PC-3 (cell line): ENCODE measurements at regions of chr1 and their contacts with region 1.

Region 1: GRCh38 chr1:162696286-162696862 is 64.1 kb downstream of the DDR2 start:
- DNase-seq: peak; percentile 93
- ATAC-seq: peak; percentile 94
- H3K4me3 ChIP-seq: peak overlapping the region; percentile 40; the same call in 1 of the 2 replicates
- H3K27ac ChIP-seq: peak overlapping the region; percentile 71
- H3K4me1 ChIP-seq: peaks cover 36% of the 10 kb centered on the region
- H3K27me3 ChIP-seq: no peaks in the 10 kb centered on the region
- CTCF ChIP-seq: no peak

Region 2: DNA sequence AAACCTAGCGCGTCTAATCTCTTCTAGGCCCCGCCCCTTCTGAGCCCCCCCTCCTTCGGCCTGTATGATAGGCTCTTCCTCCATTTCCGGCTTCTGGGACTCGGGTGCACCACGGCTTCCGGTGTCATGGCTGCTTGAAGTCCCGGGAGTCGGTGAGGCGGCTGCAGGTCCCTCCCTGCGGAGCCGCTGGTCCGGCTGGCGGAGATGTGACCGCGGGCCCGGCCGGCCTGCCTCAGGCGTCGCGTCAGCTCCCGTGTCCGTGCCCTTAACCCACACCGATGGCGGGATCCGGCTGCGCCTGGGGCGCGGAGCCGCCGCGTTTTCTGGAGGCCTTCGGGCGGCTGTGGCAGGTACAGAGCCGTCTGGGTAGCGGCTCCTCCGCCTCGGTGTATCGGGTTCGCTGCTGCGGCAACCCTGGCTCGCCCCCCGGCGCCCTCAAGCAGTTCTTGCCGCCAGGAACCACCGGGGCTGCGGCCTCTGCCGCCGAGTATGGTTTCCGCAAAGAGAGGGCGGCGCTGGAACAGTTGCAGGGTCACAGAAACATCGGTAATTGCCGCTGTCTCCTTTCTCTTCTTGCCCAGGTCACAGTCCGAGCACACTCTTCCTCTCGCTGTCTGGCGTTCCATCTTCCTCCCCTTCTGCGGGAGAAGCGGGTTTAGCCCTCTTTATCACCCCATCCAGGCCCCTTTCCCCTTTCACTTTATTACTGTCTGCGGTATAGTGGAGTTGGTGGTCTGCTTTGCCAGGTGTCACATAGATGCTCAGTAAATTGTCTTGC is 198.5 kb before region 1 on chr1 and contains the start of gene UHMK1:
- CTCF ChIA-PET with region 1: no interaction called
- POLR2A ChIA-PET with region 1: no interaction called
- intact Hi-C with region 1: loop called (anchors 5 kb)
- DNase-seq: peak; percentile 91
- ATAC-seq: peak; percentile 93
- H3K4me3 ChIP-seq: peak within 1 kb of the TSS; percentile 77
- H3K27ac ChIP-seq: peak within 1 kb of the TSS; percentile 51
- H3K4me1 ChIP-seq: peaks cover 37% of the 10 kb centered on the region
- H3K27me3 ChIP-seq: no peaks in the 10 kb centered on the region
- CTCF ChIP-seq: no peak
- total RNA-seq, gene UHMK1: 69.4 and 70.4 TPM in 2 replicates

Region 3: DNA sequence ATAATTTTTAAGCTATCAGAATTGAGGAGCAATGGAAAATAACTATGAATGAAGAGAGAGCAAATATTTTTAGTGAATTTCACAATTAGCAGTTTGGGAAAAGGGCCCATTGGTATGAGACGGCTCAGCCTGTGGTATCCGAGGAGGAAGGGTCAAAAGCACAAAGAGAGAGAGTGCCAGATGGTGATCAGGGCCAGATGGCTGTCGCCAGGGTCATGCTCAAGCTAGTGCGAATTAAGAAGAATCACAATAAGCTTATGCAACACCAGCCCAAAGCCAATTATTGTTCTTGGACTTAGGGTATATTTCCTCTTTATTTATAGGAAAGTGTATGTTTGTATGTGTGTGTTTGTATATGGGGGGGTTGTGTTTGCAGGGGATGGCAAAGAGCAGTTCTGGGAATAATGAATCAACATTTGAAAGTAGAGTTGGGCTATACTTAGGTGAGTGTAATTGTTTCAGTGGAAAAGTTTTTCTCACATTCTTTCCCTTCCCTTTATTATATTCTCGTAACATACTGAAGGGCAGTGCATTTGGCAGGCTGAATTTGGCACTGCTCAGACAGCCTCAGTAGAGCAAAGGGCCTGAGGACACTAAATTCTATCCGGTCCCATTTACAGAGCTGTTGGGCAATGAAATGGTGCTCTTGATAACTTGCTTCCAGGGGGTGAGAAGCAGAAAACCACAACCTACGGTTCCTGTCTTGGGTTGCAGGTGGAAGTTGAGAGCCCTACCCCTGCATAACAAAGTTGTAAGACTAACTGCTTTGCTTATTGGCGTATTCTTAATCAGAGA is 83.6 kb before region 1 on chr1:
- CTCF ChIA-PET with region 1: interaction called, 4 read pairs
- POLR2A ChIA-PET with region 1: no interaction called
- intact Hi-C with region 1: loop called (anchors 1 kb)
- DNase-seq: no peak
- ATAC-seq: peak; percentile 31
- H3K4me3 ChIP-seq: no peak overlapping the region
- H3K27ac ChIP-seq: no peak overlapping the region
- H3K4me1 ChIP-seq: no peaks in the 10 kb centered on the region; the same call in 1 of the 2 replicates
- H3K27me3 ChIP-seq: no peaks in the 10 kb centered on the region
- CTCF ChIP-seq: no peak

Region 4: DNA sequence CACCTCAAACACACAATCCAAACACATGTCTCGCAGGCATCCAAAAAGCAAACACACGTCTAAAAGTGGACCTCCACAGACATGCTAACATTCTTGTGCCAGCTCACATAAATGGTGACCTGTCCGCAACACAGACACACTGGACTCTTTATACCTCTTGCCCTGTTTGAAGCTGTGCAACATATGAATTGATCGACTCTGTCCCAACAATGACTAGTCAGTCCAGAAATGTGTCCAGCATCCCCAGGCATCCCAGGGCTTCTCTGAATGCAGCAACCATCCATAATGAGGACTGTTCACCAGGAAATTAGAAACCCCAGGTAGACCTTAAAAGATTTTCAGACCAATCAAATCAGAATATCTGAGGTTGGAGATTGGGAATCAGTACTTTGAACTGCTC is 61.0 kb before region 1 on chr1:
- CTCF ChIA-PET with region 1: no interaction called
- POLR2A ChIA-PET with region 1: no interaction called
- intact Hi-C with region 1: no loop called
- DNase-seq: no peak
- ATAC-seq: no peak
- H3K4me3 ChIP-seq: no peak overlapping the region
- H3K27ac ChIP-seq: no peak overlapping the region
- H3K4me1 ChIP-seq: no peaks in the 10 kb centered on the region
- H3K27me3 ChIP-seq: no peaks in the 10 kb centered on the region
- CTCF ChIP-seq: no peak

Region 5: GRCh38 chr1:162670928-162671663 is 25.3 kb before region 1 on chr1:
- CTCF ChIA-PET with region 1: no interaction called
- POLR2A ChIA-PET with region 1: no interaction called
- intact Hi-C with region 1: no loop called
- DNase-seq: peak; percentile 18
- ATAC-seq: no peak
- H3K4me3 ChIP-seq: no peak overlapping the region
- H3K27ac ChIP-seq: no peak overlapping the region
- H3K4me1 ChIP-seq: peaks cover 30% of the 10 kb centered on the region
- H3K27me3 ChIP-seq: no peaks in the 10 kb centered on the region
- CTCF ChIP-seq: no peak

Region 6: GRCh38 chr1:162710345-162710744 is 14.0 kb after region 1 on chr1:
- CTCF ChIA-PET with region 1: interaction called, 4 read pairs
- POLR2A ChIA-PET with region 1: no interaction called
- intact Hi-C with region 1: loop called (anchors 2 kb)
- DNase-seq: peak; percentile 84
- ATAC-seq: peak; percentile 91
- H3K4me3 ChIP-seq: no peak overlapping the region
- H3K27ac ChIP-seq: peak overlapping the region; percentile 36; the same call in 1 of the 2 replicates
- H3K4me1 ChIP-seq: peaks cover 26% of the 10 kb centered on the region
- H3K27me3 ChIP-seq: no peaks in the 10 kb centered on the region
- CTCF ChIP-seq: no peak